MCF 10A (cell line): ENCODE measurements at regions of chr1 and their contacts with region 1.

Region 1: DNA sequence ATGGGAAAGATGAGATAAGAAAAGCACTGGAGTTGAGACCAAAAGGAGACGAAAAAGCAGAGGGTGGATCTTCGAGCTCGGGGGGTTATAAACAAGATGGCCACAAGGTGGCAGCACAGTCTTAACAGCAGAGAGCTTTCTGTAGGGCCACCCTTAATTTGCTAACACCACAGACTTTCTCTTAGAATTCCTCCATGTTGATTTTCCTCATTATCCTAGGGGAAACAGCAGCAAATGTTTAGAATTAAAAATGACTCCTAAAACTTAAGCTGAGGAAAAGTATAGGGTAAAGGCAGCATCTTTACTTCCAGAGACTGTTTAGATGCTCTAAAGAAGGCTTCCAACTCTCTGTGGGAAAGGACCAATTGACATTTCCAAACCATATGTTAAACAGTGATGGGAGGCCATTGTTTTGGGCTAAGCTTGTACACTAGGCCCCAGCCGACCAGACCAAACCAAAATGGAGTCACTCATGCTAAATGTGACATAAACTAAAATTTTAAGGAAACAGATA is 2.5 kb upstream of the APOBEC4 start:
- DNase-seq: peak; percentile 90
- H3K4me3 Mint-ChIP-seq: no peak overlapping the region
- H3K27ac Mint-ChIP-seq: peak overlapping the region; percentile 1
- H3K4me1 Mint-ChIP-seq: peaks cover 19% of the 10 kb centered on the region
- H3K27me3 Mint-ChIP-seq: no peaks in the 10 kb centered on the region
- CTCF ChIP-seq: peak; percentile 92

Region 2: DNA sequence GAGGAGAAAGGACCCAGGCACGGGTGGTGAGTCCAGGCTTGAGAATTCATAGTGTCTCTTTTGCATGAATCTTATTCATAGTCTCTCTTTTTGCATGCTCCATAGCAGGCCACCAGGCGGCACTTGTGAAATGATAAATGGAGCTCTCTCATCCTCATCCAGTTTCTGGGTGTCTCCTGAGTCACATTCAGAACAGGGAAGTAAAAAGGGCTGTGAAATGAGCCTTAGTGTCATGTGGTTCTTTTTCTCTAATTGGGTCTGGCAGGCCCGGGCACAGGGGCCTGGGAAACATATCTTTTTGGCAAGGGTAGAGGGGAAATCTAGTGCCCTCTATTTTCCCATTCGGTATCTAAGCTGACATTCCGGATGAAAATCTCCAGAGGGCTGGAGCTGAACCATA is 46.3 kb before region 1 on chr1:
- CTCF ChIA-PET with region 1: interaction called, 20 read pairs
- POLR2A ChIA-PET with region 1: interaction called, 4 read pairs
- intact Hi-C with region 1: loop called (anchors 2 kb)
- DNase-seq: peak; percentile 87
- H3K4me3 Mint-ChIP-seq: peak overlapping the region; percentile 38
- H3K27ac Mint-ChIP-seq: peak overlapping the region; percentile 99
- H3K4me1 Mint-ChIP-seq: peaks cover 31% of the 10 kb centered on the region
- H3K27me3 Mint-ChIP-seq: no peaks in the 10 kb centered on the region
- CTCF ChIP-seq: peak; percentile 69

Region 3: DNA sequence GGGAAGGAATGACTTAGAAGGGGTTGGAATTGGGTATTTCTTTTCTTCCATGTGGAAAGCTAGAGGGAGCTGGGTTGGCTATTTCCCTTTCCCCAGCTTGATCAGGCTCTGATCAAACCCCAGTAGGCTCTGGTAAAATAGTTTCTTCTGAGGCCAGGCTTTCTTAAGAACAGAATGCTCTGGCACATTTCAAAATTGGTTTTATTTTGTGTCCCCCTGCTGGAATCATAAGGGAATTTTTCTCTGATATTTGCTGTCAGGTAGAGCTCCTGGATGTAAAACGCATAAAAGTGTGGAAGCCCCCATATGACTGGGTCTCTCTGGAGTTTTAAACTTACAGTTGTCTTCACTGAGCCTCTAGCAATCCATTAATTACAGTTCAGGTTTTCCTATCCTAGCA is 14.6 kb after region 1 on chr1:
- CTCF ChIA-PET with region 1: interaction called, 48 read pairs
- POLR2A ChIA-PET with region 1: interaction called, 5 read pairs
- intact Hi-C with region 1: no loop called
- DNase-seq: no peak
- H3K4me3 Mint-ChIP-seq: no peak overlapping the region
- H3K27ac Mint-ChIP-seq: no peak overlapping the region
- H3K4me1 Mint-ChIP-seq: no peaks in the 10 kb centered on the region
- H3K27me3 Mint-ChIP-seq: no peaks in the 10 kb centered on the region
- CTCF ChIP-seq: no peak

Region 4: GRCh38 chr1:183694066-183694465 is 38.4 kb after region 1 on chr1:
- CTCF ChIA-PET with region 1: interaction called, 40 read pairs
- POLR2A ChIA-PET with region 1: no interaction called
- intact Hi-C with region 1: no loop called
- DNase-seq: no peak
- H3K4me3 Mint-ChIP-seq: no peak overlapping the region
- H3K27ac Mint-ChIP-seq: no peak overlapping the region
- H3K4me1 Mint-ChIP-seq: no peaks in the 10 kb centered on the region
- H3K27me3 Mint-ChIP-seq: no peaks in the 10 kb centered on the region
- CTCF ChIP-seq: no peak

Region 5: GRCh38 chr1:183841950-183842794 is 186.6 kb after region 1 on chr1:
- CTCF ChIA-PET with region 1: no interaction called
- POLR2A ChIA-PET with region 1: no interaction called
- intact Hi-C with region 1: no loop called
- DNase-seq: no peak
- H3K4me3 Mint-ChIP-seq: no peak overlapping the region
- H3K27ac Mint-ChIP-seq: no peak overlapping the region
- H3K4me1 Mint-ChIP-seq: no peaks in the 10 kb centered on the region
- H3K27me3 Mint-ChIP-seq: no peaks in the 10 kb centered on the region
- CTCF ChIP-seq: no peak

Region 6: DNA sequence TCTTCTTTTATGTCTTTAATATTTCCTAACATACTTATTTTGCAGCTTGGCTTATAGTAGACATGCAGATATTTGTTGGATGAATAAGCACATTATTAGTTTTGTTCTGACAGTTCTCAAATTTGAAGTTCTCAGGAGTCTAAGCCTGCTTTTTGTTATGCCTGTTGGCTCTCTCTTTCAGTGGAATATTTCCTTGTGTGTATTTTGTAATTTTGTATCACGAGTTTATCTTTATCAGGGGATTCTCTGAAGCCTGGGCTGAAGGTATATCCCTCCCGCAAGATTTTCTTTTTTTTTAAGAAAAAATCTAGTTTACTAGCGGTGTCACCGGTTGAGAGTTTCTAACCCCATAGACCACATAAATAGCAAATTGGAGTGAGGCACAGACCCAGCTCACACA is 255.2 kb after region 1 on chr1:
- CTCF ChIA-PET with region 1: interaction called, 225 read pairs
- POLR2A ChIA-PET with region 1: interaction called, 36 read pairs
- intact Hi-C with region 1: loop called (anchors 1 kb)
- DNase-seq: no peak
- H3K4me3 Mint-ChIP-seq: no peak overlapping the region
- H3K27ac Mint-ChIP-seq: no peak overlapping the region
- H3K4me1 Mint-ChIP-seq: peaks cover 5% of the 10 kb centered on the region
- H3K27me3 Mint-ChIP-seq: no peaks in the 10 kb centered on the region
- CTCF ChIP-seq: no peak

Region 7: GRCh38 chr1:184222652-184223052 is 567.0 kb after region 1 on chr1:
- CTCF ChIA-PET with region 1: interaction called, 4 read pairs
- POLR2A ChIA-PET with region 1: no interaction called
- intact Hi-C with region 1: loop called (anchors 1 kb)
- DNase-seq: peak; percentile 77
- H3K4me3 Mint-ChIP-seq: peak overlapping the region; percentile 12
- H3K27ac Mint-ChIP-seq: no peak overlapping the region
- H3K4me1 Mint-ChIP-seq: peaks cover 5% of the 10 kb centered on the region
- H3K27me3 Mint-ChIP-seq: peaks cover 15% of the 10 kb centered on the region
- CTCF ChIP-seq: peak; percentile 93